A673 (cell line): ENCODE measurements at regions of chr14 and their contacts with region 1.

Region 1: GRCh38 chr14:64891839-64892375 is 12.2 kb upstream of the SPTB start:
- DNase-seq: peak; percentile 72
- H3K4me3 ChIP-seq: no peak overlapping the region
- H3K27ac ChIP-seq: no peak overlapping the region
- H3K4me1 ChIP-seq: no peaks in the 10 kb centered on the region
- H3K27me3 ChIP-seq: peaks cover 13% of the 10 kb centered on the region
- CTCF ChIP-seq: peak; percentile 67

Region 2: DNA sequence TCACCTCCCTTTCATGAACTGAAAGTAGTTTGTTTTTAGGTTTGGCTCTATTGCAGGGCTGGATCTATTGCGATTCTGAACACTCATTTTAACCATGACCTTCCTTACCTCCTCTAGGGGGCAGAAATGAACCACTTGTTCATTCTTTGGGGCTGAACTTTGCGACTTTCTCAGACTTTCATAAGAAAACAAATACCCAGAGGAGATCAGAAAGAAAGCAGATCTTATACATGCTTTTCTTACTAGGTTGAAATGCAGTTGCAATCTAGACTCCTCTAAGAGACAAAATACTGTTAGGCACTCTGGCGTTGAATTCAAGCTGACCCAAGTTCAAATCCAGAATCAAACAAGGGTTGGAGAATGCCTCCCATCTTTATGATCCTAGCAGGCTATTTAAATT is 220.3 kb before region 1 on chr14:
- CTCF ChIA-PET with region 1: no interaction called
- POLR2A ChIA-PET with region 1: no interaction called
- intact Hi-C with region 1: loop called (anchors 5 kb)
- DNase-seq: peak; percentile 80
- H3K4me3 ChIP-seq: no peak overlapping the region
- H3K27ac ChIP-seq: no peak overlapping the region
- H3K4me1 ChIP-seq: no peaks in the 10 kb centered on the region
- H3K27me3 ChIP-seq: no peaks in the 10 kb centered on the region
- CTCF ChIP-seq: peak; percentile 79

Region 3: GRCh38 chr14:64823305-64823861 is 68.5 kb before region 1 on chr14:
- CTCF ChIA-PET with region 1: interaction called, 13 read pairs
- POLR2A ChIA-PET with region 1: no interaction called
- intact Hi-C with region 1: loop called (anchors 5 kb)
- DNase-seq: peak; percentile 74
- H3K4me3 ChIP-seq: no peak overlapping the region
- H3K27ac ChIP-seq: no peak overlapping the region
- H3K4me1 ChIP-seq: peaks cover 9% of the 10 kb centered on the region
- H3K27me3 ChIP-seq: no peaks in the 10 kb centered on the region
- CTCF ChIP-seq: peak; percentile 69